Panc1 (cell line): ENCODE measurements at regions of chr15 and their contacts with region 1.

Region 1: GRCh38 chr15:68672781-68673205 is 94.0 kb downstream of the CORO2B start:
- DNase-seq: no peak
- ATAC-seq: no peak
- H3K4me3 ChIP-seq: no peak overlapping the region
- H3K27ac ChIP-seq: no peak overlapping the region
- H3K4me1 ChIP-seq: peaks cover 2% of the 10 kb centered on the region; the same call in 1 of the 2 replicates
- H3K27me3 ChIP-seq: no peaks in the 10 kb centered on the region
- CTCF ChIP-seq: peak; percentile 41

Region 2: DNA sequence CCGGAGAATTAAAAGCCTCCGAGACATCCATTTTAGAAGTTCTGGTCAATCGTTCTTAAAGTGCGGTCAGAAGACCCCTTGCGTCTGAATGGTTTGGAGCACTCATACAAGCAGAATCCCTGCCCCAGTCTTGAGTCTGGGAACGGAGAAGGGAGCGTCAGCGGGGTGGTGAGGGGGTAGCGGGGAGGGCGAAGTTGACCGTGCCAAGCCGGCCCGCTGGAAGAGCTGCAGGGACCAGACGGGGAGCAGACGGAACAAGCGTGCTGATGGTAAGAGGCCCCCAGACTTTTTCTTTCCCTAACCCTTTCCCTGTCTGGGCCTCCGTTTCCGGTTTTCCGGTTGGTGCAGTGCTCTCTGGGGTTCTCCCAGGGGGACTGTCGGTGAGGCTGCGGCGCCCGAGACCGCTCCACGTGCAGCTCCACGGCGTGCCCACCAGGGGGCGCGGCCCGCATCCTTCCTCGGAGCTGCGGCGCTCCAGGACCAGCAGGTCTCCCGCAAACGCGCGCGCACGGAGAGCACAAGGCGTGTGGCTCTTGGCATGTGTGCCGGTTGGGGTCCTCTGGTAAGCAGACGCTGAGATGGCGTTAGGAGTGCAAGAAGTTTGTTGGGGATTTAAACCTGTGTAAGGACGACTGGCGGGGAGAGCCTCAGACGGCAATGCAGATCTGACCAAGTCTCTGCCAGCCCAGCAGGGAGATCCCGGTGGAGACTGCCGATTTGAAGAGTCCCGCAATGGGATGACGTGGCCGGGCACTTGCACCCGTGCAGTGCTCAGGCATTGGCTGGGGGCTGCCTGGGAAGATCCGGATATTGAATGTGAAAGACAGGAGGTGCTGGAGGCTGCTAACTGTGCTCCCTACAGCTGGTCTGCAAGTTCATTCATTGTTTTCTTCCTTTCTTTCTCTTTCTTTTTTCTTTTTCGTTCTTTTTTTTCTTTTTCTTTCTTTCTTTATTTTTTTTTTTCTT is 113.2 kb before region 1 on chr15:
- CTCF ChIA-PET with region 1: interaction called, 55 read pairs
- POLR2A ChIA-PET with region 1: no interaction called
- in situ Hi-C with region 1: no loop called
- intact Hi-C with region 1: no loop called
- DNase-seq: peak; percentile 35
- ATAC-seq: peak; percentile 96
- H3K4me3 ChIP-seq: peak overlapping the region; percentile 30 to 52
- H3K27ac ChIP-seq: no peak overlapping the region
- H3K4me1 ChIP-seq: no peaks in the 10 kb centered on the region; the same call in 1 of the 2 replicates
- H3K27me3 ChIP-seq: no peaks in the 10 kb centered on the region; the same call in 1 of the 2 replicates
- CTCF ChIP-seq: peak; percentile 97

Region 3: DNA sequence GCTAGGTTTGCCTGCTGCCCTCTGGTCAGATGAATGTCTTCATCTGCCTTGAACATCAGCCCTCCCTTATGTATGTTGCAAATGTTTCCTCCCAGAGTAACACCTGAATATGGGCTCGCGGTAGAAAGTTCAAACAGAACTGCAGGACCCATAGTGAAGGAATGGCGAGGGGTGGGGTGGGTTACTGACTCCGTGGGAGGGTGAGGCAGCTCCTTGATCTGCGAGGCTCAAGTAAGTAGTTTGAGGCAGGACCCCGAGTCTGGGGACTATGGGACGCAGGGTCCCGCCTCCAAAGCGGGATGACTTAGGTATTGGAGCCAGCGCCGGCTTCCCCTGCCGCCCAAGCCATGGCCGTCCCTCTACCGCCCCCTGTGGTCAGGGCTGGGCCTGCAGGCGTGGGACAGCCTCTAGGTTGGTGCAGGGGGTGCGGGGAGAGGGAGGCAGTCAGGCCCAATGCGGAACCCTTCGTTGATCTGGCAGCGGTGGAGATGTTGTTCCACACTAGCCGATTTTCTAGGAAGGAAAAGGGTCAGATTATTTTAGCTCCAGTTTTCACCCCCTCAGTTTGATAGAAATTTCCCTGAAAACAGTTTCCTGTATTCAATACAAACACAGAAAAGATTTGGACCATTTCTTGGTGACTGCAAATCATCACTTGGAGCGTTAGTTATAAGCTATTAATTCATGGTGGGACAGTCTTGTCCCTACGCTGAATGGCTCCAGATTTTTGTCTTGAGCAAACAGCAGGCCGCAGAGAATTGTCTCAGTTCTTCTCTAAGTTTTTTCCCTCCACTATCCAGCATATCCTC is 21.7 kb before region 1 on chr15:
- CTCF ChIA-PET with region 1: interaction called, 13 read pairs
- POLR2A ChIA-PET with region 1: no interaction called
- in situ Hi-C with region 1: no loop called
- intact Hi-C with region 1: no loop called
- DNase-seq: no peak
- ATAC-seq: peak; percentile 99
- H3K4me3 ChIP-seq: peak overlapping the region in 1 of 2 experiments; percentile 42; a peak in 2 of 4 replicates
- H3K27ac ChIP-seq: no peak overlapping the region
- H3K4me1 ChIP-seq: no peaks in the 10 kb centered on the region
- H3K27me3 ChIP-seq: no peaks in the 10 kb centered on the region
- CTCF ChIP-seq: peak; percentile 97

Region 4: DNA sequence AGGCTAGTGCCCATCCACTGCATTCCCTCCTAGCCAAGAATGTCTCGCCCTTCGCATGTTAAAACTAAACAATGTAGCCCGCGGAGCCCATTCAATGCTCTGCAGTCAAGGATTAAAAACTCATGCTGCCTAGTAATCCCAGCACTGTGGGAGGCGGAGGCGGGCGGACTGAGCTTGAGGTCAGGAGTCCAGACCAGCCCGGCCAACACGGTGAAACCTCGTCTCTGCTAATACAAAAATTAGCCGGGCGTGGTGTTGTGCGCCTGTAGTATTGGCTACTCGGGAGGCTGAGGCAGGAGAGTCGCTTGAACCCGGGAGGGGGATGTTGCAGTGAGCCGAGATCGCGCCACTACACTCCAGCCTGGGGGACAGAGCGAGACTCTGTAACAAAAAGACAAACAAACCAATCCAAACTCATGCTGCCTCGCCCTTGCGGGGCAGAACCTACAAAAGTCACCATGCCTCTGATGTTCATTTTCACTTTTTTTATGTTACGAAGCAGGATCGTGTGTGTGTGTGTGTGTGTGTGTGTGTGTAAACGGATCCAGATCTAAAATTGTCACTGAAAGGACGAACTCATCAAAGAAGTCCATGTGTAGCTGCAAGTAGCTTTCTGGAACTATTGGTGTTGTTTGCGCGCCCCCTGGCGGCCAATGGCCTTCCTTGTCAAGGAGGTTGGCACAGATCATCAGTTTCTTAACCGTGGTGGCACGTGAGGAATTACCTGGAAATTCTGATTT is 202.8 kb after region 1 on chr15:
- CTCF ChIA-PET with region 1: interaction called, 12 read pairs
- POLR2A ChIA-PET with region 1: no interaction called
- in situ Hi-C with region 1: no loop called
- intact Hi-C with region 1: no loop called
- DNase-seq: peak; percentile 75
- ATAC-seq: peak; percentile 97
- H3K4me3 ChIP-seq: peak overlapping the region; percentile 16 to 52
- H3K27ac ChIP-seq: no peak overlapping the region
- H3K4me1 ChIP-seq: no peaks in the 10 kb centered on the region
- H3K27me3 ChIP-seq: peaks cover 2% of the 10 kb centered on the region; the same call in 1 of the 2 replicates
- CTCF ChIP-seq: peak; percentile 90